ENCODE measurements at regions of chr6 and their contacts with region 1.

Region 1: GRCh38 chr6:16964553-16965501 is 137.0 kb upstream of the STMND1 start:
- DNase-seq: peak; percentile 91
- H3K4me3 ChIP-seq: no peak overlapping the region
- H3K27ac ChIP-seq: no peak overlapping the region
- H3K4me1 ChIP-seq: peaks cover 35% of the 10 kb centered on the region
- H3K27me3 ChIP-seq: no peaks in the 10 kb centered on the region
- CTCF ChIP-seq: peak; percentile 99

Region 2: GRCh38 chr6:16514249-16514648 is 450.6 kb before region 1 on chr6:
- CTCF ChIA-PET with region 1: no interaction called
- POLR2A ChIA-PET with region 1: no interaction called
- intact Hi-C with region 1: loop called (anchors 10 kb)
- DNase-seq: peak; percentile 81
- H3K4me3 ChIP-seq: no peak overlapping the region
- H3K27ac ChIP-seq: no peak overlapping the region
- H3K4me1 ChIP-seq: no peaks in the 10 kb centered on the region
- H3K27me3 ChIP-seq: no peaks in the 10 kb centered on the region
- CTCF ChIP-seq: peak; percentile 67

Region 3: GRCh38 chr6:16770701-16771569 is 193.9 kb before region 1 on chr6:
- CTCF ChIA-PET with region 1: interaction called, 11 read pairs
- POLR2A ChIA-PET with region 1: no interaction called
- intact Hi-C with region 1: no loop called
- DNase-seq: peak; percentile 90
- H3K4me3 ChIP-seq: no peak overlapping the region
- H3K27ac ChIP-seq: no peak overlapping the region
- H3K4me1 ChIP-seq: peaks cover 69% of the 10 kb centered on the region
- H3K27me3 ChIP-seq: no peaks in the 10 kb centered on the region
- CTCF ChIP-seq: peak; percentile 96

Region 4: GRCh38 chr6:17138033-17138432 is 173.2 kb after region 1 on chr6:
- CTCF ChIA-PET with region 1: no interaction called
- POLR2A ChIA-PET with region 1: no interaction called
- intact Hi-C with region 1: no loop called
- DNase-seq: no peak
- H3K4me3 ChIP-seq: no peak overlapping the region
- H3K27ac ChIP-seq: no peak overlapping the region
- H3K4me1 ChIP-seq: no peaks in the 10 kb centered on the region
- H3K27me3 ChIP-seq: no peaks in the 10 kb centered on the region
- CTCF ChIP-seq: no peak

Measured in A673 (cell line).